H1 (cell line): ENCODE measurements at regions of chr14 and their contacts with region 1.

Region 1: GRCh38 chr14:36070031-36070719 is 106.3 kb downstream of the PTCSC3 start:
- DNase-seq: peak; percentile 44 to 70
- H3K4me3 ChIP-seq: no peak overlapping the region
- H3K27ac ChIP-seq: no peak overlapping the region
- H3K4me1 ChIP-seq: no peaks in the 10 kb centered on the region
- H3K27me3 ChIP-seq: no peaks in the 10 kb centered on the region
- CTCF ChIP-seq: peak; percentile 84 to 92 (median 87)
- EP300 ChIP-seq: no peak
- POLR2A ChIP-seq: no peak
- RAD21 ChIP-seq: peak; percentile 92 to 96

Region 2: GRCh38 chr14:35883677-35884293 is 186.4 kb before region 1 on chr14:
- CTCF ChIA-PET with region 1: interaction called, 78 read pairs
- POLR2A ChIA-PET with region 1: no interaction called
- DNase-seq: no peak
- H3K4me3 ChIP-seq: no peak overlapping the region
- H3K27ac ChIP-seq: no peak overlapping the region
- H3K4me1 ChIP-seq: no peaks in the 10 kb centered on the region
- H3K27me3 ChIP-seq: no peaks in the 10 kb centered on the region
- CTCF ChIP-seq: peak in 2 of 3 experiments; percentile 59 to 66; a peak in 3 of 4 replicates
- EP300 ChIP-seq: no peak
- POLR2A ChIP-seq: no peak
- RAD21 ChIP-seq: peak; percentile 36 to 50

Region 3: GRCh38 chr14:35998303-35998702 is 71.9 kb before region 1 on chr14:
- CTCF ChIA-PET with region 1: interaction called, 14 read pairs
- POLR2A ChIA-PET with region 1: no interaction called
- DNase-seq: no peak
- H3K4me3 ChIP-seq: no peak overlapping the region
- H3K27ac ChIP-seq: no peak overlapping the region
- H3K4me1 ChIP-seq: peaks cover 0 to 7% (median 3%) of the 10 kb centered on the region in 4 experiments; a peak in 4 of 7 replicates
- H3K27me3 ChIP-seq: no peaks in the 10 kb centered on the region
- CTCF ChIP-seq: no peak
- EP300 ChIP-seq: no peak
- POLR2A ChIP-seq: no peak
- RAD21 ChIP-seq: no peak

Region 4: GRCh38 chr14:36054353-36055051 is 15.7 kb before region 1 on chr14:
- CTCF ChIA-PET with region 1: interaction called, 34 read pairs
- POLR2A ChIA-PET with region 1: no interaction called
- DNase-seq: no peak
- H3K4me3 ChIP-seq: no peak overlapping the region
- H3K27ac ChIP-seq: no peak overlapping the region
- H3K4me1 ChIP-seq: peaks cover 0 to 1% (median 0%) of the 10 kb centered on the region in 4 experiments; a peak in 1 of 7 replicates
- H3K27me3 ChIP-seq: no peaks in the 10 kb centered on the region
- CTCF ChIP-seq: no peak
- EP300 ChIP-seq: no peak
- POLR2A ChIP-seq: no peak
- RAD21 ChIP-seq: no peak

Region 5: GRCh38 chr14:36315159-36315853 is 245.1 kb after region 1 on chr14:
- CTCF ChIA-PET with region 1: interaction called, 13 read pairs
- POLR2A ChIA-PET with region 1: no interaction called
- DNase-seq: no peak
- H3K4me3 ChIP-seq: no peak overlapping the region
- H3K27ac ChIP-seq: no peak overlapping the region
- H3K4me1 ChIP-seq: peaks cover 0 to 8% (median 2%) of the 10 kb centered on the region in 4 experiments; a peak in 5 of 7 replicates
- H3K27me3 ChIP-seq: no peaks in the 10 kb centered on the region
- CTCF ChIP-seq: no peak
- EP300 ChIP-seq: no peak
- POLR2A ChIP-seq: no peak
- RAD21 ChIP-seq: no peak

Region 6: DNA sequence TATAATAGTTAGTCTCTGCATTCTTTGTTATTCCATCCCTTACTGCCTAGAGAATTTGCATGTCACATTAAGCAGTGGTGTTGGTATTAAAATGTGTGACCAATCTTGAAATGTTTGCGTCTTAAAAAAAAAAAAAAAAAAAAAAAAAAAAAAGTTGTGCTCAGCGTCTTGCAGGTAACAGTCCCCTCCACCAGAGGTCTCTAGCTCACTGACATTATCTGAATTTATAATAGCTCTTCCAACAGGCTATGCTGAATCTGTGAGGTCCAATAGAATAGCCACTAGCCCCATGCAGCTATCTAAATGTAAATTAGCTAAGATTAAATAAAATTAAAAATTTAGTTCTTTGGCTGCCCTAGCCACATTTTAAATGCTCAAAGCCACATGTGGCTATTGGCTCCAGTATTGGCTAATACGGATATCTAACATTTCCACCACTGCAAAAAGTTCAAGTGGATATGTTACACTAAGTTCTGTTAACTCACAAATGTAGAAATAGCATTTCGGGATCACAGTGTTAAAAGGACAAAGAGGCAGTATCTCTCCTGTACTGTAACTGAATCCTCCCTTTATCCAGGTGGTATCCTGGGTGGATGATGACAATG is 483.6 kb after region 1 on chr14:
- CTCF ChIA-PET with region 1: interaction called, 47 read pairs
- POLR2A ChIA-PET with region 1: no interaction called
- DNase-seq: no peak
- H3K4me3 ChIP-seq: no peak overlapping the region
- H3K27ac ChIP-seq: no peak overlapping the region
- H3K4me1 ChIP-seq: peaks cover 0 to 6% (median 4%) of the 10 kb centered on the region in 4 experiments; a peak in 2 of 7 replicates
- H3K27me3 ChIP-seq: no peaks in the 10 kb centered on the region; a peak in 1 of 7 replicates
- CTCF ChIP-seq: peak in 2 of 3 experiments; percentile 62 to 64; a peak in 2 of 4 replicates
- EP300 ChIP-seq: no peak
- POLR2A ChIP-seq: no peak
- RAD21 ChIP-seq: peak; percentile 69 to 70